ENCODE measurements at regions of chr13 and their contacts with region 1.

Region 1: DNA sequence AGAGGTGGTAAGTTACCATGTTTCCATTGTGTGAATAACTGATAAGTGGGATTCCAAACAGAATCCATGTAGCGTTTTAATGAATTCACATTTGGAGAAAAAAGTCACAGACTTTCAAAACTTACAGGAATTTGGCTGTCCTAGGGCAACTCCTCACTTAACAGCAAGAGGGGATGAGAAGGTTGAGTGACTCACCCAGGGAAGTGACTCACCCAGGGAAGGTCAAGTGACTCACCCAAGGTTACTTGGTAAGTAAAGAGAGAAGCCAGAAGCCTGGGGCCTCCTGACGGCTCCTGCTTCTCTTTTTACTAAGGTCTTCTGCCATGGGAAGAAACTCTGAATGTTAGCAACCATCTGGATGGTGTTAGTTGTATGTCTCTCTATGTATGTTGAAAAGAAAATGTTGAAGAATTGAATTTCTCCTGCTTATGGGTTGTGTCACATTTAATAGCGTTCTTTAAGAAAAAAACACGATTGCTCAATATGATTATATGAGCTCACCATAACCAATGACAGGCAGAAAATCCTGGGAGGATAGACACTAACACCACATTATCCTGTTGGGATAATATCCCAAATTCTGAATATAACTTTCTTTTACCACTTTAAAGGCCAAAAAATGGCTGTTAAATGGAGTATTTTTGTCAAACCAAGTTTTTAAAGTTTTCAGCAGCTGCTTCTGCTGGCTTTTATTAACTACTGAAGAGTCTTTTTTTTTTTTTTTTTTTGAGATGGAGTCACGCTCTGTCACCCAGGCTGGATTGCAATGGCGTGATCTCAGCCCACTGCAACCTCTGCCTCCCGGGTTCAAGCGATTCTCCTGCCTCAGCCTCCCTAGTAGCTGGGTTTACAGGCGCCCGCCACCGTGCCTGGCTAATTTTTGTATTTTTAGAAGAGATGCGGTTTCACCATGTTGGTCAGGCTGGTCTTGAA is 195.6 kb downstream of the GGACT start:
- DNase-seq: peak; percentile 85
- H3K4me3 Mint-ChIP-seq: no peak overlapping the region
- H3K27ac Mint-ChIP-seq: peak overlapping the region; percentile 26
- H3K4me1 Mint-ChIP-seq: peaks cover 27% of the 10 kb centered on the region
- H3K27me3 Mint-ChIP-seq: no peaks in the 10 kb centered on the region

Region 2: DNA sequence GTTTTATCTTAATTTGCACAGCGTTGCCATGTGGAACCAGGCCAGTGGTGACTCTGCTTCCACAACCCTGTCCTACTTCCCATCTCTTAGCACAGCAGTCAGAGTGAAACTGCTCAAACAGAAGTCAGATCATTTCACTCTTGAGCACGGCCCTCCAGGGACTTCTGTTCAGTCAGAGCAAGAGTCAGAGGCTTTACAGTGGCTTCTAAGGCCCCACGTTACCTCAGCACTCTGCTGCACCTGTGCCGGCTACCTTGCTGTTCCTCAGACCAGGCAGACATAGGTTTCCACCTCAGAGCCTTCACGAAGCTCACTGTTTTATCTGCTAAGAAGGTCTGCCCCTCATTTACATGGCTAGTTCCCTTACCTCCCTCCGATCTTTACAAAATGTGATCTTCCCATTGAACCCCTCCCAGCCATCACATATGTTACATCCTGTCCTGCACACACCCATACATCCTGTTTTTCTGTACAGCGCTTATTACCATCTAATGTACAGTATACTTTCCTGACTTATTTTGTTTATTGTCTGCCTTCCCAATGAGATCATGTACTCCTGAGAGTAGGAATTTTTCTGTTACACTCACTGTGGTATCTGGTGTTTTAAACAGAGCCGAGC is 850.1 kb before region 1 on chr13:
- CTCF ChIA-PET with region 1: no interaction called
- POLR2A ChIA-PET with region 1: no interaction called
- intact Hi-C with region 1: loop called (anchors 10 kb)
- DNase-seq: peak; percentile 78
- H3K4me3 Mint-ChIP-seq: no peak overlapping the region
- H3K27ac Mint-ChIP-seq: peak overlapping the region; percentile 24
- H3K4me1 Mint-ChIP-seq: peaks cover 51% of the 10 kb centered on the region
- H3K27me3 Mint-ChIP-seq: no peaks in the 10 kb centered on the region

Region 3: GRCh38 chr13:100129605-100130004 is 263.4 kb before region 1 on chr13:
- CTCF ChIA-PET with region 1: no interaction called
- POLR2A ChIA-PET with region 1: no interaction called
- intact Hi-C with region 1: loop called (anchors 1 kb)
- DNase-seq: no peak
- H3K4me3 Mint-ChIP-seq: no peak overlapping the region
- H3K27ac Mint-ChIP-seq: no peak overlapping the region
- H3K4me1 Mint-ChIP-seq: peaks cover 22% of the 10 kb centered on the region
- H3K27me3 Mint-ChIP-seq: no peaks in the 10 kb centered on the region

Region 4: GRCh38 chr13:100334214-100334613 is 58.8 kb before region 1 on chr13:
- CTCF ChIA-PET with region 1: no interaction called
- POLR2A ChIA-PET with region 1: no interaction called
- intact Hi-C with region 1: no loop called
- DNase-seq: no peak
- H3K4me3 Mint-ChIP-seq: no peak overlapping the region
- H3K27ac Mint-ChIP-seq: no peak overlapping the region
- H3K4me1 Mint-ChIP-seq: no peaks in the 10 kb centered on the region
- H3K27me3 Mint-ChIP-seq: no peaks in the 10 kb centered on the region

Region 5: GRCh38 chr13:100363874-100364273 is 29.1 kb before region 1 on chr13:
- CTCF ChIA-PET with region 1: no interaction called
- POLR2A ChIA-PET with region 1: interaction called, 15 read pairs
- intact Hi-C with region 1: loop called (anchors 1 kb)
- DNase-seq: no peak
- H3K4me3 Mint-ChIP-seq: no peak overlapping the region
- H3K27ac Mint-ChIP-seq: no peak overlapping the region
- H3K4me1 Mint-ChIP-seq: peaks cover 6% of the 10 kb centered on the region
- H3K27me3 Mint-ChIP-seq: no peaks in the 10 kb centered on the region

Region 6: DNA sequence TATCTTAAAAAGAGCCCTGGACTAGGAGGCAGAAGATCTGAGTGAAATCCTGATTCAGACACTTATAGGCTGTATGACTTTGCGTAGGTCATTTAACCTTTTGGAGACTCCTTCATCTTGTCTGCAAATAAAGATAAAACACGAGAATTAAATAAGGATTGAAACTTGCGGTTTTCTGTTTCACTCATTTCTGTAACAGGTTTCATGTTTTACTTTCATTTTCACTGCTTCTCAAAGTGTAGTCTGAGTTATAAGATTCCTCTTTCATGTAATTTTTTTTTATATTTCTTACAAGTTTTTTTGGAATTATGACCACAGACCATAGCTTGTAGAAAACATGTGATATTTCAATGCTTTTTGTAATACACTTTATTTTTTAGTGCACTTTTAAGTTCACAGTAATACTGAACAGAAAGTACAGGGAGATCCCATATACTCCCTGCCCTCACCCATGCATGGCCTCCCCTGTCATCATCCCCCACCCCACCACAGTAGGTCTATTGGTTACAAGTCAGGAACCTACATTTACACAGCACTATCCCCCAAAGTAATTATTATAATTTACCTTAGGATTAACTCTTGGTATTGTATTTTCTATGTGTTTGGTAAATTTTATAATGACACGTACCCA is 1234.1 kb after region 1 on chr13:
- CTCF ChIA-PET with region 1: no interaction called
- POLR2A ChIA-PET with region 1: no interaction called
- intact Hi-C with region 1: loop called (anchors 1 kb)
- DNase-seq: peak; percentile 50
- H3K4me3 Mint-ChIP-seq: peak overlapping the region; percentile 24
- H3K27ac Mint-ChIP-seq: no peak overlapping the region
- H3K4me1 Mint-ChIP-seq: peaks cover 42% of the 10 kb centered on the region
- H3K27me3 Mint-ChIP-seq: peaks cover 14% of the 10 kb centered on the region

Measured in activated CD4-positive, alpha-beta memory T cell treated with anti-CD3 and anti-CD28 coated beads for 36 hours (primary cell).